ENCODE measurements at regions of chr1 and their contacts with region 1.

Region 1: GRCh38 chr1:24289937-24290595 is 29.1 kb upstream of the GRHL3 start:
- DNase-seq: peak; percentile 99
- H3K4me3 Mint-ChIP-seq: peak overlapping the region; percentile 44
- H3K27ac Mint-ChIP-seq: peak overlapping the region; percentile 94
- H3K4me1 Mint-ChIP-seq: peaks cover 55% of the 10 kb centered on the region
- H3K27me3 Mint-ChIP-seq: no peaks in the 10 kb centered on the region
- CTCF ChIP-seq: no peak

Region 2: DNA sequence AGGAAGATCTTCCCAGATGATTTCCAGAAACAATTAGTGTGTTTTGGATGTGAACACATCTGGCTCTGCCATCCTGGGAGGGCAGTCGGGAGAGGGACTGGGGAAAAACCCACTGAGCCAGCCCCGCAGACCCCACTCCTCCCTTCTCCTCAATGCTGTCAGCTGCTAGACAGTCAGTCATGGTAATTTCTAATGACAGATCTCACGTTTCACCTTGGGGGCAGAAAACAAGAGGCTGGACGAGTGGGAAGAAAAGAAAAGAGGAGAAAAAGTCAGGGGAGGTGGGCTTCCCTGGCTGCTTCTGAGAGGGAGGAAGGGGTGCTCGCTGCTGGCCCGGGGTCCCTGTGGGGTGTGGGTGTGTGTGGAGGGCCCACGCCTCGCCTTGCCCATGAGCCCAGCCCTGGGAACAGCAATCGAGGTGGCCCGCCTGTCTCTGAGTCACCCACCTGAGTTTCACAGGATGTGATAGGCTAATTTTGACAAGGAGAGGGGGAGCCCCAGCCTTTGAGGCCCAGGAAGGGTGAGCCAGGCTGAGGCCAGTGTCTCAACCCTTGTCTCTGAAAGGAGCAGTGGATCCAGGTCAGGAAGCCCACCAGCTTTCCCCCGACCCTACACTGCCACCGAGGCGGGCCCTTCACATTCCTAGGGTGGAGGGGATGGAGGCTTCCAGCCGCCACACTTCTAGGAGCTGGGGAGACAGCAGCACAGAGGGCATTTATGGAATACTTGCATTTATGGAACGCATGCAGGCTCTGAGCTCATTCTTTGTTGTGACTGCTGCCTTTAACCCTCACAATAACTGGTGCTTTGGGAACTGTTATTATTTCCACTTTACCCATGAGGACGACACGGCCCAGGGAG is 53.9 kb before region 1 on chr1:
- CTCF ChIA-PET with region 1: interaction called, 4 read pairs
- POLR2A ChIA-PET with region 1: interaction called, 15 read pairs
- intact Hi-C with region 1: no loop called
- DNase-seq: peak; percentile 83
- H3K4me3 Mint-ChIP-seq: no peak overlapping the region
- H3K27ac Mint-ChIP-seq: peak overlapping the region; percentile 73
- H3K4me1 Mint-ChIP-seq: peaks cover 24% of the 10 kb centered on the region
- H3K27me3 Mint-ChIP-seq: no peaks in the 10 kb centered on the region
- CTCF ChIP-seq: no peak

Region 3: GRCh38 chr1:24248859-24249258 is 41.2 kb before region 1 on chr1:
- CTCF ChIA-PET with region 1: no interaction called
- POLR2A ChIA-PET with region 1: no interaction called
- intact Hi-C with region 1: no loop called
- DNase-seq: no peak
- H3K4me3 Mint-ChIP-seq: no peak overlapping the region
- H3K27ac Mint-ChIP-seq: no peak overlapping the region
- H3K4me1 Mint-ChIP-seq: no peaks in the 10 kb centered on the region
- H3K27me3 Mint-ChIP-seq: no peaks in the 10 kb centered on the region
- CTCF ChIP-seq: no peak

Region 4: DNA sequence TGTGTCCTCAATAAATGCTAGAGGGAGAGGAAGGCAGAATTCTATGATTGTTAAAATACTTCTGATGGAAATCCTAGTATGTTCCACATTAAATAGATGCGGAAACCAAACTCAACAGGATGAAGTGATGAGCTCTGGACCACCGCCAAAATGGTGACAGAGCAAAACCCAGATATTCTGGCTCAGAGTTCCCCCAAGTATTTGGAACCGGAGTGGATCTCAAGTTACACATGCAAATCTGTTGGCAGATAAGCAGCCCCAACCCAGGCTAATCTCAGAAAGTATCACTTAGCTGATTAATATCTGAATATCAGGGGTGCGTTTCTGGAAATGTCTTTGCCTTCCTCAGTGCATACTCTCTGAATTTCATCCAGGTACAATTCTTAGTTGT is 11.7 kb after region 1 on chr1:
- CTCF ChIA-PET with region 1: interaction called, 5 read pairs
- POLR2A ChIA-PET with region 1: interaction called, 35 read pairs
- intact Hi-C with region 1: no loop called
- DNase-seq: no peak
- H3K4me3 Mint-ChIP-seq: no peak overlapping the region
- H3K27ac Mint-ChIP-seq: peak overlapping the region; percentile 46
- H3K4me1 Mint-ChIP-seq: peaks cover 12% of the 10 kb centered on the region
- H3K27me3 Mint-ChIP-seq: no peaks in the 10 kb centered on the region
- CTCF ChIP-seq: no peak

Region 5: GRCh38 chr1:24308365-24309015 is 18.4 kb after region 1 on chr1:
- CTCF ChIA-PET with region 1: interaction called, 7 read pairs
- POLR2A ChIA-PET with region 1: interaction called, 400 read pairs
- intact Hi-C with region 1: no loop called
- DNase-seq: peak; percentile 50
- H3K4me3 Mint-ChIP-seq: no peak overlapping the region
- H3K27ac Mint-ChIP-seq: no peak overlapping the region
- H3K4me1 Mint-ChIP-seq: peaks cover 7% of the 10 kb centered on the region
- H3K27me3 Mint-ChIP-seq: no peaks in the 10 kb centered on the region
- CTCF ChIP-seq: no peak

Region 6: DNA sequence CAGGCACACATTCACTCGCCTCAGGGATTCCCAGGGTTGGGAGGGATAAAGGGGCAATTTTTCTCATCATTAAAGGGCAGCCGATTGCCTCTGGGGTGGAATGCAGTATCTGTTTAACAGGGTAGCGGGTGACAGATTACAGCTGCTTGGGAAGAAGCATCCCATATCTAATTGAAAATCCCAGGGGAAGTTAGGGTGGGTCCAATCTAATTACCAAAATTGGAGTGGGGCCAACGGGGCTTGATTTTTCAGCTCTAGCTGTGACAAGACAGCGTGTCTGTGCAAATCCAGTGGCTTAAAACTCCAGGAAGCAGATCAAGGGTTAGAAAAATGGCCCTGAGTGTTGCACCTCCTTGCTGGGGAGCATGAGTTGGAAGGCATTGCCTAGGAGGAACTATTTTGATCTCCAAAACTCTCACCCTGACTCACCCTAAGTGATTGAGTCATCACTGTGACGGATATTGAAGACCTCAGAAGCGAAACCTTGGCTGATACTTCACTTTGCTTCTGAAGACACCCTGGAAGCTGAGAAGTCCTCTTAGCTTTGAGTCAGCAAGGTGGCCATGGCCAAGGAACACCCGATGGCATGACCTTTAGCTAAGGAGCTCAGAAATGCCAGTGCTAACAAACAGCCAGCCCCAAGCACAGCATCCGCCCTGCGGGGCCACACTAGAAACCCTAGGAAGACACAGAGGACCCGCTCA is 75.1 kb after region 1 on chr1:
- CTCF ChIA-PET with region 1: interaction called, 4 read pairs
- POLR2A ChIA-PET with region 1: interaction called, 13 read pairs
- intact Hi-C with region 1: no loop called
- DNase-seq: peak; percentile 98
- H3K4me3 Mint-ChIP-seq: peak overlapping the region; percentile 28
- H3K27ac Mint-ChIP-seq: peak overlapping the region; percentile 89
- H3K4me1 Mint-ChIP-seq: peaks cover 33% of the 10 kb centered on the region
- H3K27me3 Mint-ChIP-seq: no peaks in the 10 kb centered on the region
- CTCF ChIP-seq: no peak

Region 7: GRCh38 chr1:24374891-24375786 is 85.1 kb after region 1 on chr1:
- CTCF ChIA-PET with region 1: no interaction called
- POLR2A ChIA-PET with region 1: interaction called, 21 read pairs
- intact Hi-C with region 1: no loop called
- DNase-seq: peak; percentile 43
- H3K4me3 Mint-ChIP-seq: peak overlapping the region; percentile 56
- H3K27ac Mint-ChIP-seq: peak overlapping the region; percentile 99
- H3K4me1 Mint-ChIP-seq: peaks cover 35% of the 10 kb centered on the region
- H3K27me3 Mint-ChIP-seq: no peaks in the 10 kb centered on the region
- CTCF ChIP-seq: no peak

Region 8: GRCh38 chr1:24385160-24385940 is 95.3 kb after region 1 on chr1:
- CTCF ChIA-PET with region 1: interaction called, 7 read pairs
- POLR2A ChIA-PET with region 1: interaction called, 21 read pairs
- intact Hi-C with region 1: no loop called
- DNase-seq: peak; percentile 79
- H3K4me3 Mint-ChIP-seq: no peak overlapping the region
- H3K27ac Mint-ChIP-seq: peak overlapping the region; percentile 84
- H3K4me1 Mint-ChIP-seq: peaks cover 66% of the 10 kb centered on the region
- H3K27me3 Mint-ChIP-seq: no peaks in the 10 kb centered on the region
- CTCF ChIP-seq: peak; percentile 53

Region 9: GRCh38 chr1:24727501-24728216 is 437.6 kb after region 1 on chr1:
- CTCF ChIA-PET with region 1: no interaction called
- POLR2A ChIA-PET with region 1: no interaction called
- intact Hi-C with region 1: no loop called
- DNase-seq: no peak
- H3K4me3 Mint-ChIP-seq: no peak overlapping the region
- H3K27ac Mint-ChIP-seq: no peak overlapping the region
- H3K4me1 Mint-ChIP-seq: peaks cover 7% of the 10 kb centered on the region
- H3K27me3 Mint-ChIP-seq: no peaks in the 10 kb centered on the region
- CTCF ChIP-seq: no peak